Esophagus muscularis mucosa (tissue), 4 donors: ENCODE measurements at regions of chr9 and their contacts with region 1.

Region 1: GRCh38 chr9:131046581-131047202 is 37.7 kb downstream of the LAMC3 start:
- DNase-seq: no peak
- H3K4me3 ChIP-seq: peak overlapping the region in 2 of 4 donors; percentile 14 to 20
- H3K27ac ChIP-seq: no peak overlapping the region
- H3K4me1 ChIP-seq: peaks cover 0 to 8% (median 6%) of the 10 kb centered on the region in 4 donors
- H3K27me3 ChIP-seq: peaks cover 0 to 10% (median 0%) of the 10 kb centered on the region in 4 donors
- CTCF ChIP-seq: peak; percentile 86 to 95 (median 92)
- EP300 ChIP-seq: no peak
- POLR2A ChIP-seq: no peak

Region 2: GRCh38 chr9:130444565-130445221 is 602.0 kb before region 1 on chr9 and contains the start of gene ASS1:
- intact Hi-C with region 1: no loop called
- DNase-seq: no peak
- H3K4me3 ChIP-seq: peak within 1 kb of the TSS; percentile 63 to 73 (median 72)
- H3K27ac ChIP-seq: peak within 1 kb of the TSS; percentile 80 to 86 (median 82)
- H3K4me1 ChIP-seq: peaks cover 44 to 58% (median 52%) of the 10 kb centered on the region in 4 donors
- H3K27me3 ChIP-seq: peaks cover 0 to 9% (median 0%) of the 10 kb centered on the region in 4 donors
- CTCF ChIP-seq: no peak
- EP300 ChIP-seq: no peak
- POLR2A ChIP-seq: no peak
- total RNA-seq, gene ASS1: 67.7 to 113 (median 97.1) TPM

Region 3: GRCh38 chr9:130701056-130702022 is 345.4 kb before region 1 on chr9:
- intact Hi-C with region 1: loop called (anchors 2 kb)
- DNase-seq: no peak
- H3K4me3 ChIP-seq: no peak overlapping the region
- H3K27ac ChIP-seq: peak overlapping the region; percentile 50 to 71 (median 67)
- H3K4me1 ChIP-seq: peaks cover 16 to 33% (median 30%) of the 10 kb centered on the region in 4 donors
- H3K27me3 ChIP-seq: no peaks in the 10 kb centered on the region
- CTCF ChIP-seq: peak; percentile 94 to 95 (median 95)
- EP300 ChIP-seq: no peak
- POLR2A ChIP-seq: no peak

Region 4: DNA sequence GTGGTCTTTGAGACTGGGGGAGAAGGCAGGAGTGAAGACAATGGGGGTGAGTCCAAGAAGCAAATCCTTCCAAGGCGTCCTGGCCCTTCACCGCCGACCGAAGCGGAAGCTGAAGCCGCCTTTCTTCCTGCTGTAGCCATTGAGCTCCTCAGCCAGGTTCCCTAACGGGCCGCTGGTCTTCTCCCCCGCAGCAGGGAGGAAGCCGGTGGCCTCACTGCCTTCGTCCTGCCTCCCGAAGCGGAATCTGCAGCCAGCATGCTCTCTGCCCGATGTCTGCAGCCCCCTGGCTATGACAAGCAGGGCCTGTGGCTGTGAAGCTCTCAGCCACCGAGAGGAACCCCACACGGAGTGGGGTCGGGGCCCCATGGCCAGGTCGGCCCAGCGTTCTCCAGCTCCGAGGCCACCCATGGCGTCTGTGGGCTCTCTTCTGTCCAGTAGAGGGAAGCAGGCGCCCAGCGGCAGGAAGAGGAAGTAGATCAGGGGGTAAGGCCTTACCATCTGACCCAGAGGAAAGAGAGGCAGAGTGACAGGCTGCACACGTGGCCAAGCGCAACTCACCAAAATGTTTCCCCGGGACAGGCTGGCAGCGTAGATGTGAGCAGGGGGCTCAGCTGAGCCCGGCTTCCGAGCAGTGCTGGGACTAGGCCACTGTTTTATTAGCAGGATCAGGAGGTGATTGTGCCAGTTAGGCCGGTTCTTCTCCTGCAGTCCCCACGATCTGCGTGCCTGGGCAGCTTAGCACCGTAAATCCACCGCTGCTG is 153.2 kb before region 1 on chr9:
- intact Hi-C with region 1: loop called (anchors 10 kb)
- DNase-seq: no peak
- H3K4me3 ChIP-seq: no peak overlapping the region
- H3K27ac ChIP-seq: peak overlapping the region; percentile 15 to 56 (median 38)
- H3K4me1 ChIP-seq: peaks cover 13 to 52% (median 37%) of the 10 kb centered on the region in 4 donors
- H3K27me3 ChIP-seq: peaks cover 0 to 15% (median 2%) of the 10 kb centered on the region in 4 donors
- CTCF ChIP-seq: peak; percentile 26 to 46 (median 30)
- EP300 ChIP-seq: no peak
- POLR2A ChIP-seq: no peak

Region 5: GRCh38 chr9:131098391-131099101 is 51.9 kb after region 1 on chr9:
- intact Hi-C with region 1: no loop called
- DNase-seq: no peak
- H3K4me3 ChIP-seq: peak overlapping the region in 2 of 4 donors; percentile 60
- H3K27ac ChIP-seq: peak overlapping the region in 2 of 4 donors; percentile 7 to 17
- H3K4me1 ChIP-seq: peaks cover 21 to 52% (median 40%) of the 10 kb centered on the region in 4 donors
- H3K27me3 ChIP-seq: peaks cover 0 to 59% (median 28%) of the 10 kb centered on the region in 4 donors
- CTCF ChIP-seq: no peak
- EP300 ChIP-seq: no peak
- POLR2A ChIP-seq: no peak